Activated CD4-positive, alpha-beta T cell treated with anti-CD3 and anti-CD28 coated beads for 36 hours (primary cell): ENCODE measurements at regions of chrX and their contacts with region 1.

Region 1: DNA sequence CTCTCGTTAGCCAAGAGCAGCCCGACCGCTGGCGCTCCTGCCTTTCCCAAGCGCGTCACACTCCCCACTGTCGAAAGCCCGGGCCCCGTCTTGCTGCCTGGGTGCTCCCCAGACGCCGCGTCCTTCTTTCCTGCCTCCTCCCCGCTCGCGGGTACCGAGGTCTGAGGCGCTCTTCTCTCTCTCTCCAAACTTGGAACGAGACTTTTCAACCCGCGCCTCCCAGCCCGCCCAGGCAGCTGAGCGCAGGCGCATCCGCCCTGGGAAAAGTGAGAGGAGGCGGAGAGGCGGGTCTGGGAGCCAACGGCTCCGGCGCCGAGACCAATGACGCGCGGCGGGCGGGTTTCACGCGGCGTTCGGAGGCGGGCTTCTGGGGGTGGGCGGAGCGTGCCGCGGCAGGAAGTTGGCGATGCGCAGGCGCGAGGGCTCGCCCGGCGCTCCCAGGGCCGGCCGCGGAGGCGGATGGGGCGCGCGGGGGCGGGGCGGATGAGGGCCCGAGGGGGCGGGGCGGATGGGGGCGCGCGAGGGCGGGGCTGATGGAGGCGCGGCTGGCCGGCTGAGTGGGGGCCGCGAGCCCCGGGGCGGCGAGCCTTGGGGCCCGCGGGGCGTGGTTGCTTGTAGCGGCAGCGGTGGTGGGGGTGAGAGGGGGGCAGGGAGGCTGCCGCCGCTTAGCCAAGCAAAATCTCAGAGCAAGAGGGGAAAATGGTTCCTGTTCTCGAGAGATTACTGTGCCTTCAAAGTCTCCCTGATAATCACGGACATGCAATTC is at the start of gene RBBP7:
- DNase-seq: peak; percentile 93
- ATAC-seq: peak; percentile 84
- H3K4me3 Mint-ChIP-seq: peak within 1 kb of the TSS; percentile 93
- H3K27ac Mint-ChIP-seq: peak within 1 kb of the TSS; percentile 95
- H3K4me1 Mint-ChIP-seq: peaks cover 24% of the 10 kb centered on the region
- H3K27me3 Mint-ChIP-seq: peaks cover 2% of the 10 kb centered on the region
- total RNA-seq, gene RBBP7: 198 to 238 TPM

Region 2: GRCh38 chrX:15737960-15738902 is 1132.0 kb before region 1 on chrX and contains the start of gene CA5B:
- CTCF ChIA-PET with region 1: interaction called, 3 read pairs
- POLR2A ChIA-PET with region 1: no interaction called
- intact Hi-C with region 1: loop called in 1 of 2 experiments (anchors 5 kb)
- DNase-seq: peak; percentile 97
- ATAC-seq: peak; percentile 94
- H3K4me3 Mint-ChIP-seq: peak within 1 kb of the TSS; percentile 82
- H3K27ac Mint-ChIP-seq: peak within 1 kb of the TSS; percentile 78
- H3K4me1 Mint-ChIP-seq: peaks cover 40% of the 10 kb centered on the region
- H3K27me3 Mint-ChIP-seq: no peaks in the 10 kb centered on the region
- total RNA-seq, gene CA5B: 13.3 to 17.7 TPM

Region 3: GRCh38 chrX:16250296-16250695 is 620.0 kb before region 1 on chrX:
- CTCF ChIA-PET with region 1: no interaction called
- POLR2A ChIA-PET with region 1: no interaction called
- intact Hi-C with region 1: no loop called
- DNase-seq: no peak
- ATAC-seq: no peak
- H3K4me3 Mint-ChIP-seq: no peak overlapping the region
- H3K27ac Mint-ChIP-seq: no peak overlapping the region
- H3K4me1 Mint-ChIP-seq: no peaks in the 10 kb centered on the region
- H3K27me3 Mint-ChIP-seq: peaks cover 7% of the 10 kb centered on the region

Region 4: GRCh38 chrX:16786139-16786790 is 84.0 kb before region 1 on chrX and contains the start of gene TXLNG:
- CTCF ChIA-PET with region 1: no interaction called
- POLR2A ChIA-PET with region 1: no interaction called
- intact Hi-C with region 1: loop called (anchors 1 kb)
- DNase-seq: peak; percentile 96
- ATAC-seq: peak; percentile 99
- H3K4me3 Mint-ChIP-seq: peak within 1 kb of the TSS; percentile 93
- H3K27ac Mint-ChIP-seq: peak within 1 kb of the TSS; percentile 76
- H3K4me1 Mint-ChIP-seq: peaks cover 18% of the 10 kb centered on the region
- H3K27me3 Mint-ChIP-seq: no peaks in the 10 kb centered on the region
- total RNA-seq, gene TXLNG: 17.3 to 21.4 TPM

Region 5: DNA sequence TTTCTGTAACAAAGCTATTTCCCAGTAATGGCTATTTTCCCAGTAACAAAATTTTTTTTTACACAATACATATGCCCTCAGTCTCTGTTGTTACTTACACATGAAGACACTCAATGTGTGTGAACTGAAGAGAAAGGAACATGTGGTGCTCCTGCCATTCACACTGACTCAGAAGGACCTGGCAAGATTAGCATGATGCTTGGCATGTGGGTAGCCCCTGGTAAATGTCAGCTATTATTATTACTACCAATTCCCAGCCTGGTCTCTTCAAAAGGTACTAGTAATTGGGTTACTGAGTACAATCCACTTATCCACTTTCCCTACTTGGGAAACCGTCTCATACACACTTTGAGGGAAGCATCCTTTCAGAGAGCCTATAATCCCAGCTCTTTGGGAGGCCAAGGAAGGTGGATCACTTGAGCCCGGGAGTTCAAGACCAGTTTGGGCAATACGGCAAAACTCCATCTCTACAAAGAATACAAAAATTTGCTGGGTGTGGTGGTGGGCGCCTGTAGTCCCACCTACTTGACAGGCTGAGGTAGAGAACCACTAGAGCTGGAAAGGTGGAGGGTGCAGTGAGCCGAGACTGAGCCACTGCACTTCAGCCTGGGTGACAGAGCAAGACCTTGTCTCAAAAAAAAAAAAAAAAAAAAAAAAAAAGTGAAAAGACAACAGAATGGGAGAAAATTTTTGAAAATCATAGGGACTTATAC is 14.8 kb before region 1 on chrX:
- CTCF ChIA-PET with region 1: interaction called, 5 read pairs
- POLR2A ChIA-PET with region 1: interaction called, 3 read pairs
- intact Hi-C with region 1: loop called (anchors 1 to 2 kb)
- DNase-seq: peak; percentile 13
- ATAC-seq: peak; percentile 50
- H3K4me3 Mint-ChIP-seq: no peak overlapping the region
- H3K27ac Mint-ChIP-seq: peak overlapping the region; percentile 82
- H3K4me1 Mint-ChIP-seq: peaks cover 65% of the 10 kb centered on the region
- H3K27me3 Mint-ChIP-seq: no peaks in the 10 kb centered on the region

Region 6: GRCh38 chrX:16946361-16946964 is 76.2 kb after region 1 on chrX and contains the start of gene REPS2:
- CTCF ChIA-PET with region 1: no interaction called
- POLR2A ChIA-PET with region 1: no interaction called
- intact Hi-C with region 1: loop called in 1 of 2 experiments (anchors 1 kb)
- DNase-seq: peak; percentile 88
- ATAC-seq: peak; percentile 99
- H3K4me3 Mint-ChIP-seq: peak within 1 kb of the TSS; percentile 72
- H3K27ac Mint-ChIP-seq: no peak within 1 kb of the TSS
- H3K4me1 Mint-ChIP-seq: peaks cover 2% of the 10 kb centered on the region
- H3K27me3 Mint-ChIP-seq: peaks cover 10% of the 10 kb centered on the region
- total RNA-seq, gene REPS2: not detected